AG04449 (cell line): ENCODE measurements at regions of chr15 and their contacts with region 1.

Region 1: DNA sequence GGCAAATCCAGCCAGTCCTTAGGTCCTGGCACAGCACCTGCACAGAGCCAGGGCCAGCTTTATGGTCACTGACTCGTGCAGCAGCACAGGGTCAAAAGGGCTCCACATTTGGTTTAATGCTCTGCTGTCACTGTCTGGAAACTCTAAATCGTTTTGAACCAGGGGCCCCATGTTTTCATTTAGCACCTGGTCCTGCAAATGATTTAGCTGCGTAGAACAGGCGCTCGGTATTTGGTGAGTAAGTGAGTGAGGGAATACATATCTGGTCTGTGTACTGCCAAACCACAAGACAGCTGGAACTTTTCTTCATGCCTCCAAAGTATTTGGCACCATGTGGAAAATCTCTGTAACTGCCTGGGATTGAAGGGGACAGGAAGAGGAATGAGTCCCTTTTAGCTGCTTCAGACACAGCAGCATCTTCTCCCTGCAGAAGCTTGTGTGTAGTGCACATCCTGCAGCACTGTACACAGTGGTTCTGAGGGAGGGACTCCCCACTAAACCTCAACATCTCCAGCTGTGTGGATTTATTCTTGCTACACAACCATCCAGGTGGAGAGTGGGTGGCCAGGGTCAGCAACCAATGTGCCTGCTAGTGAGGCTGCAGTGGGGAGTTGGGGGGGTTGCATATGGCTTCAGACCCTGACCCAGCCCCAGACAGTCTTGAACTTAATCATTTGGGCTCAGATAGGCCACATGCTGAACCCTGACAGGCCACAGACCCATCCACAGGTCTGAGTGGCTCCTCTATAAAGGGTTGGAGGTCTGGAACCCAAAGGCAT is 1.1 kb downstream of the SH2D7 start:
- DNase-seq: peak; percentile 80
- H3K4me3 ChIP-seq: no peak overlapping the region
- CTCF ChIP-seq: no peak

Region 2: GRCh38 chr15:77959432-77959879 is 134.0 kb before region 1 on chr15:
- CTCF ChIA-PET with region 1: interaction called, 538 read pairs
- POLR2A ChIA-PET with region 1: no interaction called
- DNase-seq: no peak
- H3K4me3 ChIP-seq: peak overlapping the region; percentile 34
- CTCF ChIP-seq: peak; percentile 92

Region 3: DNA sequence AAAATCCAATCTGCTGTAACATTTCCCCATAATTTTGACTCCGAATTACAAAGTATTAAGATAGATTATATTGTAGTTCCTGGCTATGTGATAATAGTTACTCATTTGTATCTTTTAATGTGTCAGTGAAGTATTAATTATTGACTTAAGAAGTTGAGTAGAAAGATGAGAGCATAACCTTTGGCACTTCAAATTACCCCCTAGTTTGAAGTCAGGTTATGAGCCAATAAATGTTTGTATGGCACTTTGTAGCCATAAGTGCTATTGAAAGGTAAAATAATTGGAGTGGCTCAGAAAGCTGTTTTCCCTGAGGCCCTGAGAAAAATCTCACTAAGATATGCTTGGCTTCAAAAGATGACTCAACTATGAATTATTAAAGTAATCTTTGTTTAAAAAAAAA is 375.6 kb after region 1 on chr15:
- CTCF ChIA-PET with region 1: no interaction called
- POLR2A ChIA-PET with region 1: no interaction called
- DNase-seq: no peak
- H3K4me3 ChIP-seq: no peak overlapping the region
- CTCF ChIP-seq: no peak